ENCODE measurements at regions of chr9 and their contacts with region 1.

Region 1: GRCh38 chr9:33415501-33416038 is 13.2 kb upstream of the AQP7 start:
- DNase-seq: peak; percentile 99
- ATAC-seq: peak; percentile 95
- H3K4me3 ChIP-seq: peak overlapping the region in 1 of 3 experiments; percentile 42; a peak in 1 of 6 replicates
- H3K27ac ChIP-seq: no peak overlapping the region
- H3K4me1 ChIP-seq: peaks cover 59% of the 10 kb centered on the region
- H3K27me3 ChIP-seq: peaks cover 3 to 62% of the 10 kb centered on the region in 2 experiments; a peak in 4 of 5 replicates
- CTCF ChIP-seq: peak; percentile 96
- EP300 ChIP-seq: peak; percentile 84 to 98; a peak in 3 of 4 replicates
- POLR2A ChIP-seq: no peak
- RAD21 ChIP-seq: peak; percentile 84

Region 2: DNA sequence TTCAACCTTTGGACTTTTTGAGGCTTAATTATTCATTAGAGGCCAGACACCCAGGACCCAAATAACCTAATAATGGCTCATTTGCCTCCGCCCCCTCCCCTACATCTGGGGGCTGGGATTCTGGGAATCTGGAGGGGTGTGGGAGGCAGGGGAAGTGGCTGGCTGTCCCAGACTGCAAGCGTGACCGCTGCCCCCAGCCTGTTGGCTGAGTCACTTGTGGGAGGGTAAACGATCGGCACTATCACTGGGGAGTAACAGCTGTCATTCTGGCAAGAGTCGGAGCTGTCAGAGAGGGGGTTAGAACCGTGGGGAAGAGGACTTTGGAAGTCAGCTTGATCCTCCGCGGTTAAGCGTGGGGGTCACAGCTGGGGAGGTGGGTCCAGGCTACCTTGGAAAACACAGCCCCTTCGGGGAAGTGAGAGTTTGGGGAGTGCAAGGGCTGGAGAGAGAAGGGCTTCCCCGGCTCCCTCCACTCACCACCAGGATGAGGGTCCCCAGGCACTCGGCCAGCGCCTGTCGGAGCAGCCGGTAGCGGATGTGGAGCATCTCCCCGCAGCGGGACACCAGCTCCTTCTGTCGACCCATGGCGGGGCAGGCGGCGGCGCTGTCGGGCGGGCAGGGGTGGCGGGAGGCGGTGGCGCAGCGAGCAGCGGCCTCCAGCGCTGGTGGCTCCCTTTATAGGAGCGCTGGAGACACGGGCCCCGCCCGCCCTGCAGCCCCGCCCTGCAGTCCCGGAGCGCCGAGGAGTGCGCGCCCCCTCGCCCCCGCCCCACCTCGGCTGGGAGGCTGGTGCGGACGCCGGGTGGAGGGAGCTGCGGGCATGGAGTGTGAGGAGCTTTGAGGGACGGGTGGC is 31.6 kb after region 1 on chr9 and contains the start of gene AQP3:
- CTCF ChIA-PET with region 1: no interaction called
- POLR2A ChIA-PET with region 1: interaction called, 18 read pairs
- in situ Hi-C with region 1: no loop called
- intact Hi-C with region 1: loop called (anchors 2 kb)
- DNase-seq: peak; percentile 37
- ATAC-seq: peak; percentile 86
- H3K4me3 ChIP-seq: peak within 1 kb of the TSS; percentile 38 to 70 (median 51)
- H3K27ac ChIP-seq: no peak within 1 kb of the TSS
- H3K4me1 ChIP-seq: peaks cover 65% of the 10 kb centered on the region
- H3K27me3 ChIP-seq: peaks cover 8 to 48% of the 10 kb centered on the region in 2 experiments
- CTCF ChIP-seq: peak; percentile 67
- EP300 ChIP-seq: no peak
- POLR2A ChIP-seq: no peak
- RAD21 ChIP-seq: peak; percentile 76
- total RNA-seq, gene AQP3: 0.87 and 1.4 TPM in 2 replicates

Region 3: DNA sequence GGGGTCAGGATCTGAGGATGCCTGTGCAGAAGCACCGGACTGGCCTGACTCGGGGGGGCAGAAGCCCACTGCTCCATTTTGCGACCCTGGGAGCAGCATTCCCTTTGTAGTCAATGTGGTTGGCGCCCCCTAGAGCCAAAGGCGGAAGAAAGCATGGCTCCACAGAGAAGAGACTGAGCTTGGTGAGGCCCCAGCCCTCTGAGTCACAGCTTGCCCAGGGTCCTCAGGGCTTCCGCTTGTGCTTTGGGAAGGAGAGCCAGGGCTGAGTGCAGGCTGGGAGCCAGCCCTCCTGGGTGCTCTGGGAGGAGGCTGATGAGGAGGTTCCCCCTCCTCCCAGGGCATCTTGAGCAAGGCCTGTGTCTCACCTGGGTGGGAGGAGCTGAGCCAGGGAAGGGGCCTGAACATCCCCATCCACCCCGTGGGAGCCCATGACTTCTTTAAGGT is 37.3 kb after region 1 on chr9:
- CTCF ChIA-PET with region 1: no interaction called
- POLR2A ChIA-PET with region 1: interaction called, 18 read pairs
- in situ Hi-C with region 1: no loop called
- intact Hi-C with region 1: loop called (anchors 2 kb)
- DNase-seq: peak; percentile 73
- ATAC-seq: peak; percentile 89
- H3K4me3 ChIP-seq: no peak overlapping the region; a peak in 1 of 6 replicates
- H3K27ac ChIP-seq: no peak overlapping the region
- H3K4me1 ChIP-seq: peaks cover 33% of the 10 kb centered on the region
- H3K27me3 ChIP-seq: peaks cover 1 to 19% of the 10 kb centered on the region in 2 experiments; a peak in 4 of 5 replicates
- CTCF ChIP-seq: peak; percentile 93
- EP300 ChIP-seq: no peak
- POLR2A ChIP-seq: no peak
- RAD21 ChIP-seq: peak; percentile 80

Region 4: GRCh38 chr9:33466565-33467495 is 51.3 kb after region 1 on chr9:
- CTCF ChIA-PET with region 1: interaction called, 3 read pairs
- POLR2A ChIA-PET with region 1: interaction called, 9 read pairs
- in situ Hi-C with region 1: no loop called
- intact Hi-C with region 1: loop called (anchors 5 kb)
- DNase-seq: peak; percentile 19
- ATAC-seq: peak; percentile 88
- H3K4me3 ChIP-seq: no peak overlapping the region
- H3K27ac ChIP-seq: no peak overlapping the region
- H3K4me1 ChIP-seq: peaks cover 13% of the 10 kb centered on the region
- H3K27me3 ChIP-seq: no peaks in the 10 kb centered on the region
- CTCF ChIP-seq: peak; percentile 97
- EP300 ChIP-seq: no peak
- POLR2A ChIP-seq: no peak
- RAD21 ChIP-seq: peak; percentile 94

Region 5: DNA sequence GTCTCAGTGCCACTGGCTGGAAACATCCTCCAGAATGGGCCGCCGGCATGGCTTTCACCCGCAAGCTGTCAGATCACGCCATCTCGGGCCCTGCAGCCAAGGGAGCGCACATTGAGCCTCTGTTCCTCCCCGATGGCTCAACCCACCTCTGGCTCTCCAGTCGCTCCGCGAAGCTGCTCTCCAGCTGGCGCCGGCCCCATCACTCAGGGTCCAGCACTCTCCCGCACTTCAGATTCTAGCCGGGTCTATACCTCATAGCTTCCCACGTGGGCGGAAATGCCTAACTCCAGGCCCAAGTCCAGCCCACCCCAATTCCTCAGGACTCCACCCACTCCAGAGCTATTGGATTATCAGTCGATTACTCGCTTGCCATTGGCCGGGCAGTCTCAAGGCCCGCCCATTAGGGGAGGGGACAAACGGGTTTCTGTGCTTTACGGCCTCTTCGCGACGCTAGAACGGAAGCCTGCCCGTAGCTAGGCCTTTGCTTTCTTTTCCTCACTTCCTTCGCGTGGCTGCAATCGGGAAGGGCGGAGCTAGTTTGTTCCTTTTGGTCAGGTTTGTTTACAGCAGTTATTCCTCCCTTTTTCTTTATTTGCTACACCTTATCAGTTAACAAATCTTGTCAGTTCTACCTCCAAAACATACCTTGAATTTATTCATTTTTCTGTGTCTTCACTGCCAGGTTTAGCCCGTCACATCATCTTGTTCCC is 58.2 kb after region 1 on chr9 and contains the start of gene NOL6:
- CTCF ChIA-PET with region 1: no interaction called
- POLR2A ChIA-PET with region 1: interaction called, 16 read pairs
- in situ Hi-C with region 1: no loop called
- intact Hi-C with region 1: loop called (anchors 5 kb)
- DNase-seq: peak; percentile 98
- ATAC-seq: peak; percentile 100
- H3K4me3 ChIP-seq: peak within 1 kb of the TSS; percentile 86 to 96 (median 93)
- H3K27ac ChIP-seq: peak within 1 kb of the TSS; percentile 55
- H3K4me1 ChIP-seq: peaks cover 17% of the 10 kb centered on the region
- H3K27me3 ChIP-seq: no peaks in the 10 kb centered on the region; a peak in 1 of 5 replicates
- CTCF ChIP-seq: no peak
- EP300 ChIP-seq: no peak
- POLR2A ChIP-seq: peak; percentile 74 to 85
- RAD21 ChIP-seq: no peak
- total RNA-seq, gene NOL6: 28.6 and 30.2 TPM in 2 replicates